Activated CD4-positive, alpha-beta T cell treated with anti-CD3 and anti-CD28 coated beads, Interleukin-2, amount 10 ng/mL, durations not matched to agents 24 days and 14 days (primary cell): ENCODE measurements at regions of chr2 and their contacts with region 1.

Region 1: DNA sequence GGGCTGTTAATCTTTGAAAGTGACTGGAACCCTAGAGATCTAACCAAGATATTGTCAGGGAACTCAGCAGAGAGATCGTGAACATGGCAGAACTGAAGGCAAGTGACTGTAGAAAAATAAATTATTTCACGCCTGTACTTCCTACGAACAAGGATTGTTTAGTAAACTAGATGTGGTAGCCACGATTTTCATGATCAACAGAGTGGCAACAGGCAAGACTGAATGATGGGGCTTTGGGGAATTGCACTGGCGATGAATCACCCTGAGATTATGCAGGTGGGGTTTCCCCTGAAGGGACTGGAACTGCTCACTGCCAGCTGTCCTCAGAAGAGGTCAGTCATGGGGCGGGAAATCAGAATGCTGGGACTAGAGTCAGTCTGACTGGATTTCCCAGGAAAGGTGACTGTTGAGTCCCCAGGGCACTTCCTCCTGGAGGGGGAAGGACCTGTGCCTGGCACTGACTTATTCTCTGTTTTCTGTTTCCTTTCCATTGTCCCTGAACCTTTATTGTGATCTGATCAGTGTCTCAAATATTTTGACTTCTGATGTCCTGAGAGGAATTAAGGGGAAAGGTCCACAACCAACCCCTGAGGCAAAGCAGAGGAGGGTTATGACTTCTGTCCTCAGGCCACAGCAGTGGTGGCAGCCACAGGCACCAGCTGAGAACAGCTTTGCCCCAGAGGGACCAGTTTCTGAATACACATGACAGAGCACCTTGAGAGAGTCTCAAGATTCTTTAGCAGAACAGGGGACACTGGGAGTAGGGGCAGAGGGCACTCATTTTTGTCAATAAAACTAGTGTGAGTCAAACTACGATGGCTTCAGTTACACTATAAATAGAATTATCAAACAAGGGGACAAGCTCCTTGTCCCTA is 70.0 kb downstream of the NAB1 start:
- DNase-seq: peak; percentile 73
- H3K4me3 Mint-ChIP-seq: peak overlapping the region; percentile 64
- H3K27ac Mint-ChIP-seq: peak overlapping the region; percentile 96
- H3K4me1 Mint-ChIP-seq: peaks cover 53% of the 10 kb centered on the region
- H3K27me3 Mint-ChIP-seq: no peaks in the 10 kb centered on the region

Region 2: DNA sequence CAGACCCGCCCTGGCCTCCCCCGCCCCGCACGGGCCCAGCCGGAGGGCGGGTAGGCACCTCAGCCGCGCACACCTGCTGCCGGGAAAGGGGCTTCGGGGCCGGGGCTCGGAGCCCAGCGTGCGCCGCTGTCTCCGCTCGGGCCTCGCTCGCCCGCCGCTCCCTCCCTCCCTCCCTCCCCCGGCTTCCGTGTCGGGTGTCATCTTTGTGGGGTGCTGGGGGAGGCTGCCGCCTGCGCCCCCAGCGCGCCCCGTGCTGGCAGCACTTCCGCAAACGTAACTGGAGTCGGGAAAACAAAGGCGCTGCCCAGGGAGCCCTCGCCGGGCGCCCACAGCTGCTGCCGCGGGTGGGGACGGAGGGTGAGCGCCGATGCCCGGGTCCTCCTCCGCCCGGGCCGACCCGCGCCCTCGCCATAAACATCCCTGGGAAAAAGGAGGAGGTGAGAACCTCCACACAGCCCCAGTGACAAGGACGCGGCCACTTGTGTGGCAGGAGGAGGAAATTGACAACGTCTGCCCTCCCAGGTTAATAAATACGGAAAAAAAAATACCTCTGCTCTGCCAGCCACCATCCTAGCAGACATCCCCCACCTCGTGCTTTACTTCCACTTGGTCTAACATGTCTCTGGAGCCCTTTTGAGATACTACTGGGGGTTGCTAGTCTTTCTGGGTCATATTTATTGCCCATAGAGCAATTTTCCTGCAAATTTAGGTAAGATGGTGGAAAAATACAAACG is 310.2 kb before region 1 on chr2:
- intact Hi-C with region 1: loop called (anchors 1 kb)
- DNase-seq: peak; percentile 91
- H3K4me3 Mint-ChIP-seq: peak overlapping the region; percentile 87
- H3K27ac Mint-ChIP-seq: peak overlapping the region; percentile 94
- H3K4me1 Mint-ChIP-seq: peaks cover 41% of the 10 kb centered on the region
- H3K27me3 Mint-ChIP-seq: no peaks in the 10 kb centered on the region

Region 3: DNA sequence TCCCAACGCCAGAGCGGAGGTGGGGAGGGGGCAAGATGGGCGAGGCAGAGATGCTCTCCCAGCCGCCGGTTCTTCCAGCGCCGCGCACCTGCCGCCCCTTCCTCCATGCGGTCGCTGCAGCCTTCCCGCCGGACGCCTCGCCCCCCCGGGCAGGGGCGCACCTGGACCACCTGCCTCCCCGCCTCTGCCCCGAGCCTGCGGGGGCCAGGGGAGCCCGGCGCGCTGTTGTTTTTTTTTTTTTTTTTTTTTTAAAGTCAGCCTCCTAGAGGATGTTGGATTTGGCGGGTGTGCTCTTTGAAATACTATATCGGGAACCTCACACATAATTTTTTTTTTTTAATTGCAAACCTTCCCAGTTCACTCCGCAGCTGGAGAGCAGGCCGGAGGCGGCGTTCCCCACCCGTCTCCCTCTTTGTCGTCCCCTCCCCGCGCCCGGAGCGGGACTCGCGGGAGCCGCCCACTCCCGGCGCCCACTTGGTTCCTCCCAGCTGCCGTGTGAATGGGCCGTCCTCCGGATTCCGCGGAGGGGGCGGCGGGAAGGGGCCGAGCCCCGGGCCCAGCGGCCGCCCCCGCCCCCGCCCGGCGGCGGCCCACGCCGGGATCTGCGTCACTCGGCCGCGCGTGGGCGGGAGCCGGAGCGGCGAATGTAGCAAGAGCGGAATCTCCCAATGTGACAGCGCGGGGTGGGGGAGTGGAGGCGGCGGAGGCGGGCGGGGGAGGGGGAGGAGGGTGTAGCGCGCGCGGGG is 70.4 kb before region 1 on chr2:
- intact Hi-C with region 1: loop called (anchors 1 kb)
- DNase-seq: peak; percentile 96
- H3K4me3 Mint-ChIP-seq: peak overlapping the region; percentile 72
- H3K27ac Mint-ChIP-seq: peak overlapping the region; percentile 82
- H3K4me1 Mint-ChIP-seq: peaks cover 36% of the 10 kb centered on the region
- H3K27me3 Mint-ChIP-seq: no peaks in the 10 kb centered on the region

Region 4: GRCh38 chr2:190695739-190696138 is 23.1 kb before region 1 on chr2:
- intact Hi-C with region 1: loop called (anchors 1 kb)
- DNase-seq: peak; percentile 55
- H3K4me3 Mint-ChIP-seq: no peak overlapping the region
- H3K27ac Mint-ChIP-seq: peak overlapping the region; percentile 64
- H3K4me1 Mint-ChIP-seq: peaks cover 18% of the 10 kb centered on the region
- H3K27me3 Mint-ChIP-seq: no peaks in the 10 kb centered on the region

Region 5: GRCh38 chr2:190791347-190791975 is 72.6 kb after region 1 on chr2:
- intact Hi-C with region 1: loop called (anchors 2 kb)
- DNase-seq: no peak
- H3K4me3 Mint-ChIP-seq: peak overlapping the region; percentile 53
- H3K27ac Mint-ChIP-seq: peak overlapping the region; percentile 86
- H3K4me1 Mint-ChIP-seq: peaks cover 66% of the 10 kb centered on the region
- H3K27me3 Mint-ChIP-seq: no peaks in the 10 kb centered on the region

Region 6: GRCh38 chr2:191020221-191020741 is 301.4 kb after region 1 on chr2:
- intact Hi-C with region 1: loop called (anchors 2 kb)
- DNase-seq: peak; percentile 99
- H3K4me3 Mint-ChIP-seq: no peak overlapping the region
- H3K27ac Mint-ChIP-seq: no peak overlapping the region
- H3K4me1 Mint-ChIP-seq: peaks cover 31% of the 10 kb centered on the region
- H3K27me3 Mint-ChIP-seq: peaks cover 2% of the 10 kb centered on the region